ENCODE measurements at regions of chr12 and their contacts with region 1.

Region 1: DNA sequence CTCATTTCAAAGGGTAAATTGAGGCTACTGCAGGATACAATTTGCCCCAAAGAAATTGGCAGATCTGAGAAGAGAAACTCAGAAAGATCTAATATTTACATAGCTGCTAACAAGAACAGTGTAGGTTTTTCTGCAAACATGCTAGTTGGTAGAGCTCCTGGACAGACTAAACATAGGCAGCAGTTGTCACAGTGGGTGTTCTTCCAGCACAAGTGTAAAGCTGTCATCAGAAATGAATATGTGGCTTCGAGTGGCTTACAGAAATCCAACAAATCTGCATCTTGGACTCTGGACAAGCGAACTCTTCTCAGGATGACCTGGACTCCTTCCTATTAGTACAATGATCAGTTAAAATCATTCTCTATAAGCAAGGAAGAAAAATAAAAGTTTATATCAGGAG is 5.9 kb downstream of the CBX5 start:
- DNase-seq: no peak
- H3K4me3 Mint-ChIP-seq: no peak overlapping the region
- H3K27ac Mint-ChIP-seq: no peak overlapping the region
- H3K4me1 Mint-ChIP-seq: peaks cover 77% of the 10 kb centered on the region
- H3K27me3 Mint-ChIP-seq: no peaks in the 10 kb centered on the region

Region 2: GRCh38 chr12:53090563-53090962 is 1183.4 kb before region 1 on chr12:
- CTCF ChIA-PET with region 1: no interaction called
- POLR2A ChIA-PET with region 1: no interaction called
- intact Hi-C with region 1: no loop called
- DNase-seq: no peak
- H3K4me3 Mint-ChIP-seq: no peak overlapping the region
- H3K27ac Mint-ChIP-seq: no peak overlapping the region
- H3K4me1 Mint-ChIP-seq: no peaks in the 10 kb centered on the region
- H3K27me3 Mint-ChIP-seq: peaks cover 7% of the 10 kb centered on the region

Region 3: DNA sequence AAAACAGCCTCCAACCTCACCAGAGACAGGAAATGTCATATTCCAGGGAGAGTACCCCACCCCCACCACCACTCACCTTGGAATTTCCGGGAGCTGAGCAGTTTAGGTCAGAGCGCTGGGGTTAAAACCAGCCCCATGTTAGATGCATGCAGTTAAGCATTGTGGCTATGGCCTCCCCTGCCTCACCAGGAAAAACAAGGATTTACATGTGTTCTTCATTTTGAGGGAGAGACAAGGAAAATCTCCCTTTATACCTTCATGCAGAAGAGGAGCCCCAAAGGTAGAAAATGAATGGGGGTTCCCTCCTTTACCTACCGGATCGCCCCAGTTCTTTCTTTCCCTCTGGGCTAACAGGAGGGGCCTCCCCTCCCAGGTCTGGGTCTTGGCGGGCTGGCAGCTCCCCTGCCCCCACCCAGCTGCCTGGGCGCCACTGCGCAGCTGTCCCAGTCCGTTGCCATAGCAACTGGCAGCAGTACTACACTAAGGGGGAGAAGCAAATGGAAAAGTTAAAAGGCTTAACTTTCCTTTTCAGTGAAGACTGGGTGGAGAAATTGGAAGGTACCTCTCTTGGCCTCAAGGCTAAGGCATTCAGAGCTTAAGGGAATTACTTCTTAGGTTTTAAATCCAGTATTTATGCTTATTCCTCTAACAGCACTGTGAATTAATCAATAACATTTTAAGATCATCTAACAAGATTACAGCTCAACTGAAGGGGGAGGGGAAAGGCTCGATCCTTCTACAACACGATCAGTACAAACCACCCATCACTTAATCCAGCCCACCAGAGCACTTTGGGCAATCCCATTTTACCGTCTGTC is 14.6 kb before region 1 on chr12:
- CTCF ChIA-PET with region 1: interaction called, 6 read pairs
- POLR2A ChIA-PET with region 1: no interaction called
- intact Hi-C with region 1: loop called (anchors 1 kb)
- DNase-seq: peak; percentile 38
- H3K4me3 Mint-ChIP-seq: no peak overlapping the region
- H3K27ac Mint-ChIP-seq: no peak overlapping the region
- H3K4me1 Mint-ChIP-seq: peaks cover 46% of the 10 kb centered on the region
- H3K27me3 Mint-ChIP-seq: no peaks in the 10 kb centered on the region

Region 4: GRCh38 chr12:54285150-54286041 is 11.4 kb after region 1 on chr12:
- CTCF ChIA-PET with region 1: interaction called, 5 read pairs
- POLR2A ChIA-PET with region 1: interaction called, 15 read pairs
- intact Hi-C with region 1: no loop called
- DNase-seq: no peak
- H3K4me3 Mint-ChIP-seq: peak overlapping the region; percentile 47
- H3K27ac Mint-ChIP-seq: peak overlapping the region; percentile 52
- H3K4me1 Mint-ChIP-seq: peaks cover 39% of the 10 kb centered on the region
- H3K27me3 Mint-ChIP-seq: no peaks in the 10 kb centered on the region